ENCODE measurements at regions of chr1 and their contacts with region 1.

Region 1: DNA sequence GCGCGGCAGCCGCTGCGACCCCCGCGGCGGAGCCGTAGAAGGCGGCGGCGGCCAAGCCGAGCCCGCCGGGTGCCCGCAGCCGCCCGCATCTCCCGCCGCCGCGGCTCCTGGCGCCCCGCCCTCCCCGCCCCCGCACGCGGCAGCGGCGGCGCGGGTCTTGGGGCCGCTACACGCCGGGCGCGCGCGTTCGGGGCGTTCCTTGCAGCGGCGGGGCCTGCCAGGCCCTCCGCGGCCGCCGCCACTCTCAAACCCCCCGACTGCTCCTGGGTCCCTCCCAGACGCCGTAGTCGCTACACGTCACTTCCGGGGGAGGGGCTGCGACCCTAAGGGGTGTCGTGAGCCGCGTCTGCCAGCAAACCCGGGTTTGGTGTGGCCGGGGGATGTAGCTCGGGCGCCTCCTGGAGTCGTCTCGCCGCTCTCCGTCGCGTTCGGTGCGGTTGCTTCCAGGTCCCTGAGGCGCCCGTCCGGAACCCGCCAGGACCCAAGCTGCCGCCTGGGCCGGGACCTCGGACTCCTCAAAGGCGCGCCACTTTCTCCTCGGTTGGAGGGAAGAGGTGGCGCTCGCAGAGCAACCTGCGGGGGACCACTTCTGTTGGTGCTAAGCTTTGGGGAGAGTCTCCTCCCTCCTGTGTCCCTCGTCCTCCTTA is at the start of gene ELK4:
- DNase-seq: peak; percentile 100
- H3K4me3 Mint-ChIP-seq: peak within 1 kb of the TSS; percentile 90
- H3K27ac Mint-ChIP-seq: peak within 1 kb of the TSS; percentile 91
- H3K4me1 Mint-ChIP-seq: peaks cover 35% of the 10 kb centered on the region
- H3K27me3 Mint-ChIP-seq: no peaks in the 10 kb centered on the region
- CTCF ChIP-seq: peak; percentile 87
- total RNA-seq, gene ELK4: 101 and 109 TPM in 2 replicates

Region 2: DNA sequence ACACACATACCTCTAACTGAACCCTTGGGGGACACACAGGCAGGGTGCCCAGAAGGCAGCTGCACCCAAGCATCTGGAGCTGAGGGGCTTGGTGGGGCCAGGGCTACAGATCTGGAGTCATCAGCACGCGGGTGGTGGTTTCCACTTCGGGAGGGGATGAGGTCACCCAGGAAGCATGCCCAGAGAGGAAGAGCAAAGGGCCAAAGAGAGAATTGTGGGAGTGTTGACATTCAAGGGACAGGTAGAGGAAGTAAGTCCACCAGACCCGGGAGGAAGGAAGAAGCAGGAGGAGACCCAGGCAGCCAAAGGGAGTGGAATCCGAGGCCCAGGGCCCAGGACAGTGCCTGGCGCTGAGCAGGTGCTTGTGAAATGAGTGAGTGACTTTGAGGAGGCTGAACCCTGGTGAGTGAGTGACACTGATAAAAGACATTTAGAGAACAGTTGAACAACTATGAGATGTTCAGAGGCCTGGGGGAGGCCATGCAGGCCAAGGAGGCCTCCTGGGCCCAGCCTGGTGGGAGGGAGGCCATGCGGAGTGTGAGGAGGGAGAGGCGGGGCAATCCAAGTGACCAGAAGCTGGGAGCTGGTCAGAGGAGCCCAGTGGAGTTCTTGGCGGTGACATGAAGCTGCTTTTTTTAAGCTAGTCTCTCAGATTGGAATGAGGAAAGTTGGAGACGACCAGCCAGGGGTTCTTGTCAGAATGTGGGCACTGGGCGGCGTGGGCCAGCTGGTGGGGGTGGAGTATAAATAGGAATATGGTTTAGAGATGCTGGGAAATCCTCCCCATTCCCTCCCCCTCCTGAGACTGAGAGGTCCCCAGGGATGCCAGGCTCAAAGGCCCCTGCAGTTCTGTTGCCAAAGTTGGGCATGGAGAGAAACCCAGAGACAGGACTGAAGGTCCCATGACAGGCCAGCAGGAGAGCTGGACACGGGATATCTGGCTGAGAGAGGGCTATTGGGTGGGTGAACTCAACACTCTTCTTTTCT is 119.5 kb before region 1 on chr1:
- CTCF ChIA-PET with region 1: no interaction called
- POLR2A ChIA-PET with region 1: no interaction called
- intact Hi-C with region 1: no loop called
- DNase-seq: no peak
- H3K4me3 Mint-ChIP-seq: no peak overlapping the region
- H3K27ac Mint-ChIP-seq: no peak overlapping the region
- H3K4me1 Mint-ChIP-seq: no peaks in the 10 kb centered on the region
- H3K27me3 Mint-ChIP-seq: no peaks in the 10 kb centered on the region
- CTCF ChIP-seq: no peak

Region 3: DNA sequence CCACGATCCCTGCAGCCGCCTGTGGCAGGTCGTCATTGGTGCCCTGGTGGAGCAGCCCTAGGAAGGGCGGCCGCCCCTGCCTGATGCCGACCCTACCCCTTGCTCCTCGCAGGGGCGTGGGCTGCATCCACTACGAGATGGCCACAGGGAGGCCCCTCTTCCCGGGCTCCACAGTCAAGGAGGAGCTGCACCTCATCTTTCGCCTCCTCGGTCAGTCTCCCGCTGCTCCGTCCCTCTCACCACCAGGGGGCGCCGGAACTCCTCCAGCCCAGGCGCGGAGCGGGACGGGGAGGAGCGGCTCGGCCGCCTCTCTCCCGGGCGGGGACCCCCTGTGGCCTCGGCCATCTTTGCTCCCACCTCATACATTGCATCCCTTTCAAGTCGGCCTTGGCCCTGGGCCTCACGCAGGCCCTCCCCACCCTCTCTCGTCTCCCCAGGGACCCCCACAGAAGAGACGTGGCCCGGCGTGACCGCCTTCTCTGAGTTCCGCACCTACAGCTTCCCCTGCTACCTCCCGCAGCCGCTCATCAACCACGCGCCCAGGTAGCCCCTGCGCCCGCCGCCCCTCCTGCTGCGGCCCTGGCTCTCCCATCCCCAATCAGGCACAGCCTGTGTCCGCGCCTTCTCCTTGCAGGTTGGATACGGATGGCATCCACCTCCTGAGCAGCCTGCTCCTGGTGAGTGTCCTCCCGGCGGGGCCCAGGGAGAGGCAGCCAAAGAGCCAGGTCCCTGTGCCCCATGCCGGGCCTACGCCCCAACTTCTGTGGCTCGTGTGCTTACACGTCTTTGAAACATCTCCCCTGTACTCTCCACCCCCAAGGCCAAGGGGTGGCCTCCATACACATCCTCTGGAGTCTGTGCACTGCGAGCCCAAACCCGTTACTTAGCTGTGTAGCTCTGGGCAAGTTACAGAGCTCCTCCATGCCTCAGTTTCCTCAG is 102.7 kb before region 1 on chr1:
- CTCF ChIA-PET with region 1: interaction called, 19 read pairs
- POLR2A ChIA-PET with region 1: interaction called, 9 read pairs
- intact Hi-C with region 1: loop called (anchors 1 kb)
- DNase-seq: peak; percentile 89
- H3K4me3 Mint-ChIP-seq: peak overlapping the region; percentile 32
- H3K27ac Mint-ChIP-seq: no peak overlapping the region
- H3K4me1 Mint-ChIP-seq: peaks cover 6% of the 10 kb centered on the region
- H3K27me3 Mint-ChIP-seq: no peaks in the 10 kb centered on the region
- CTCF ChIP-seq: peak; percentile 100

Region 4: DNA sequence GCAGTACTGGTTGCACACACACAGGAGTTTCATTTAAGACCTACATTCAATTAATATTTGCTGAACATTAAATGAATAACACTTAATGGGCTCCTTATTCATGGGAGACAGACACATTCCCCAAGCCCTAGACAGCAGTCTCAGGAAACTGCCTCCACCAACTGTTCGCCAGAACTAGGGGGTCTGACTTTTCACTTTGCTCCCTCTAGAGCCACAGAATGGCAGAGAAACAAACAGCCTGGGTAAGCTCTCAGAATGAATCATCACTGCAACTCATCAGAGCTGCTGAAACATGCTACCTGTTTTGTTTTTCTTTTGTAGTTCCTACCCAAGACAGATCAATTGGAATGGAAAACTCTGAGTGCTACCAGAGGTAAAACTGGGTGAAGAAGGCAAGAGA is 31.8 kb before region 1 on chr1:
- CTCF ChIA-PET with region 1: interaction called, 185 read pairs
- POLR2A ChIA-PET with region 1: interaction called, 555 read pairs
- intact Hi-C with region 1: no loop called
- DNase-seq: peak; percentile 42
- H3K4me3 Mint-ChIP-seq: no peak overlapping the region
- H3K27ac Mint-ChIP-seq: peak overlapping the region; percentile 55
- H3K4me1 Mint-ChIP-seq: peaks cover 26% of the 10 kb centered on the region
- H3K27me3 Mint-ChIP-seq: no peaks in the 10 kb centered on the region
- CTCF ChIP-seq: peak; percentile 17

Region 5: GRCh38 chr1:205616563-205617293 is 15.1 kb before region 1 on chr1:
- CTCF ChIA-PET with region 1: interaction called, 8 read pairs
- POLR2A ChIA-PET with region 1: interaction called, 105 read pairs
- intact Hi-C with region 1: no loop called
- DNase-seq: no peak
- H3K4me3 Mint-ChIP-seq: no peak overlapping the region
- H3K27ac Mint-ChIP-seq: no peak overlapping the region
- H3K4me1 Mint-ChIP-seq: peaks cover 6% of the 10 kb centered on the region
- H3K27me3 Mint-ChIP-seq: no peaks in the 10 kb centered on the region
- CTCF ChIP-seq: no peak

Region 6: GRCh38 chr1:205750138-205751035 is 118.5 kb after region 1 on chr1 and contains the start of gene NUCKS1:
- CTCF ChIA-PET with region 1: no interaction called
- POLR2A ChIA-PET with region 1: interaction called, 38 read pairs
- intact Hi-C with region 1: no loop called
- DNase-seq: peak; percentile 100
- H3K4me3 Mint-ChIP-seq: peak within 1 kb of the TSS; percentile 80
- H3K27ac Mint-ChIP-seq: peak within 1 kb of the TSS; percentile 96
- H3K4me1 Mint-ChIP-seq: peaks cover 15% of the 10 kb centered on the region
- H3K27me3 Mint-ChIP-seq: peaks cover 1% of the 10 kb centered on the region
- CTCF ChIP-seq: no peak
- total RNA-seq, gene NUCKS1: 605 and 615 TPM in 2 replicates

Measured in MCF 10A (cell line).